ENCODE measurements at regions of chr11 and their contacts with region 1.

Region 1: DNA sequence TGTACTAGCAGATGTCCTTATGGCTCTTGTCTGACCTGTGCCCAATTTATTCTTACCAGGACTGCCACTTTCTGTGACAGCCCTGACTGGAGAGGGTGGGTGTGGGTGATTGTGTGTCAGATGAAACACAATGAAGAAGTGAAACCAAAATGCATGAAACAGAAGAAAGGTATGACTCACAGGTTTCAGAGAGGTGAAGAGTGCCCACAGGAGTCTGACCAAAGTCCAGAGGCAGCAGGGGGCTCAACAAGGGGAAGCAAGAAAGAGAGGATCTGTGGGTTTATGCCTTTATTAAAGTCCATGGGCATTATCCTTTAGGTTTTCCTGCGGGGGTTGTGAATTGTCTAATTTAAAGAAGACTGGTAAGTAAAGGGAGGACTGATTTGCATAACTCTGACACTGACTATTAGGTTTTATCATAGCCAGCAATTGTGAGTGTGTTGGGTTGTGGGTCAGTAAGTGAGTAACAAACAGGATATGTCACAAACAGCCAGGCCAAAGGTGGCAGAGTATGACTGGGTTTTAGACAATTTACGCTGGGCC is 3.9 kb upstream of the OR4C6 start:
- ATAC-seq: no peak
- H3K4me3 ChIP-seq: no peak overlapping the region
- H3K27ac ChIP-seq: no peak overlapping the region
- H3K4me1 ChIP-seq: no peaks in the 10 kb centered on the region

Region 2: GRCh38 chr11:55572548-55572947 is 85.6 kb before region 1 on chr11:
- in situ Hi-C with region 1: loop called in 1 of 9 experiments (anchors 25 kb)
- ATAC-seq: no peak
- H3K4me3 ChIP-seq: no peak overlapping the region
- H3K27ac ChIP-seq: no peak overlapping the region
- H3K4me1 ChIP-seq: no peaks in the 10 kb centered on the region